ENCODE measurements at regions of chr17 and their contacts with region 1.

Region 1: GRCh38 chr17:17823433-17824118 is 13.2 kb downstream of the SREBF1 start:
- DNase-seq: peak; percentile 46 to 93 (median 78)
- ATAC-seq: peak; percentile 83
- H3K4me3 ChIP-seq: peak overlapping the region; percentile 53
- H3K4me3 Mint-ChIP-seq: peak overlapping the region; percentile 85
- H3K27ac ChIP-seq: peak overlapping the region; percentile 87 to 88
- H3K27ac Mint-ChIP-seq: peak overlapping the region; percentile 98
- H3K4me1 ChIP-seq: peaks cover 96% of the 10 kb centered on the region
- H3K4me1 Mint-ChIP-seq: peaks cover 83% of the 10 kb centered on the region
- H3K27me3 ChIP-seq: no peaks in the 10 kb centered on the region
- H3K27me3 Mint-ChIP-seq: no peaks in the 10 kb centered on the region
- CTCF ChIP-seq: no peak

Region 2: DNA sequence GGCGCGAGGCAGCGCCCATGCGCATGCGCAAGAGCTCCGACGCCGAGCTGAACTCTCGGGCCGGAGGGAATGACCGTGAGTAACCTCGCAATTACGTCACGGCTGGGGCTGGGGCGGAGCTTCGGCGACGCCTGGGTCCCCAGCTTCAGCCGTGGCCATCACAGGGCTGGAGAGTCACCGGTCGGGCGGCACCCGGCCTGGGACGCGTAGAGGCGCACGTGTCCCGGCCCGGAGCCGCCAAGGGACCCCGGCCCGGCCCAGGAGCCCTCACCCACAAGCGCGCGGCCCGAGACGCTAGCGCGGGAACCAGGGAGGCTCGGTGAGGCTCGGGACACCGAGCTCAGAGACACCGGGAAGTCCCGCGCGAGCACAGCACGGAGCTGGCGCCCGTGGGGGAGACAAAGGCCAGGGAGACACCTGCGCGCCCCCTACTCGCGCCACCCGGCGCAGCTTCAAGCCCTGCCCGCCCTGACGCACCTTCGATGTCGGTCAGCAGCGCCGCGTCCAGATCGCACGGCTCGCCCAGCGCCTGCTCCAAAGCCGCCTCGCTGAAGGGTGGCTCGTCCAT is 12.8 kb after region 1 on chr17:
- CTCF ChIA-PET with region 1: interaction called, 6 read pairs
- POLR2A ChIA-PET with region 1: interaction called, 10 read pairs
- intact Hi-C with region 1: loop called (anchors 1 kb)
- DNase-seq: peak; percentile 94 to 99 (median 97)
- ATAC-seq: peak; percentile 74
- H3K4me3 ChIP-seq: peak overlapping the region; percentile 77
- H3K4me3 Mint-ChIP-seq: peak overlapping the region; percentile 94
- H3K27ac ChIP-seq: peak overlapping the region; percentile 96 to 97
- H3K27ac Mint-ChIP-seq: peak overlapping the region; percentile 98
- H3K4me1 ChIP-seq: peaks cover 82% of the 10 kb centered on the region
- H3K4me1 Mint-ChIP-seq: peaks cover 69% of the 10 kb centered on the region
- H3K27me3 ChIP-seq: no peaks in the 10 kb centered on the region
- H3K27me3 Mint-ChIP-seq: no peaks in the 10 kb centered on the region
- CTCF ChIP-seq: no peak

Region 3: GRCh38 chr17:17849845-17850373 is 26.3 kb after region 1 on chr17:
- CTCF ChIA-PET with region 1: no interaction called
- POLR2A ChIA-PET with region 1: no interaction called
- intact Hi-C with region 1: loop called in 1 of 2 experiments (anchors 1 kb)
- DNase-seq: peak; percentile 37 to 91 (median 60)
- ATAC-seq: peak; percentile 68
- H3K4me3 ChIP-seq: no peak overlapping the region
- H3K4me3 Mint-ChIP-seq: peak overlapping the region; percentile 72
- H3K27ac ChIP-seq: peak overlapping the region; percentile 83
- H3K27ac Mint-ChIP-seq: peak overlapping the region; percentile 99
- H3K4me1 ChIP-seq: peaks cover 56% of the 10 kb centered on the region
- H3K4me1 Mint-ChIP-seq: peaks cover 52% of the 10 kb centered on the region
- H3K27me3 ChIP-seq: no peaks in the 10 kb centered on the region
- H3K27me3 Mint-ChIP-seq: no peaks in the 10 kb centered on the region
- CTCF ChIP-seq: peak; percentile 21

Region 4: DNA sequence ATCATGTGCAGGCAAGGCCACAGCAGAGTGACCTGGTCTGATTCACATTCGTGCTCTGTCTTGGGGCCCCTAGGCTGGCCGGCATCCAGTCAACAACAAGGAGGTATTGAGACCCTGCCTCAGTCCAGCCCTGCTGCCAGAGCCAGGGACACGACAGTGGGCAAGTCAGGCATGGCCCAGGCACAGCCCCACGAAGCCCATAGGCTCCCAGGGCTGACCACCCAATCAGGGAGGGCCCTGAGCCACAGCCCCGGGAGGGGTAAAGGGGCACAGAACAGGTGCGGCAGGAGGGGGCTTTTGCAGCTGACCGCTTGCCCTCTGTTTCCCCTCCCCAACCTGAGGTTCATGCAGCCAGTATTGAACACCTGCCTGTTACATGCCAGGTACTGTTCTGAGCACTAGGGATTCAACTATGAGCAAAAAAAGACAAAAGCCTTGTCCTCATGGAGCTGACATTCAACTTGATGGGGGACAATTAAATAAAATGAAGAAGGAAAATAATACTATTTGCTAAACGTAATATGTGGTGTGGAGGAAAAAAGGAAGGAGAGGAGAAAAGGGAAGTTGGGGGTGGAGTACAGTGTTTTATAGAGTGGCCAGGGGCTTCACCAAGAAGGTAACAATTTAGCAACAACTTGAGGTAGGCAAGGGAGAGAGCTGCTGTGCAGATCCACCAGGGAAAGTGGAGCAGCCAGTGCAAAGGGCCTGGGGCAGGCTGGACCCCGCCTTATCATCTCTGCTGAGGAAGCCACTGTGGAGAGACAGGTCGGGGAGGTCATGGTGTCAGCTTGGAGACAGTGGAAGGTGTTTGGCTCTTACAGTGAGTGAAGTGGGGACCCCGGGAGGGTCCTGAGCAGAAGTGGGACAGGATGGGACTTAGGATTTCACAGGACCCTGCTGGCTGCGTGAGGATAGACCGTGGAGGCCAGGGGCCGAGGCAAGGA is 155.2 kb after region 1 on chr17:
- CTCF ChIA-PET with region 1: no interaction called
- POLR2A ChIA-PET with region 1: no interaction called
- intact Hi-C with region 1: loop called in 1 of 2 experiments (anchors 5 kb)
- DNase-seq: no peak
- ATAC-seq: no peak
- H3K4me3 ChIP-seq: no peak overlapping the region
- H3K4me3 Mint-ChIP-seq: no peak overlapping the region
- H3K27ac ChIP-seq: no peak overlapping the region
- H3K27ac Mint-ChIP-seq: no peak overlapping the region
- H3K4me1 ChIP-seq: no peaks in the 10 kb centered on the region
- H3K4me1 Mint-ChIP-seq: no peaks in the 10 kb centered on the region
- H3K27me3 ChIP-seq: no peaks in the 10 kb centered on the region
- H3K27me3 Mint-ChIP-seq: no peaks in the 10 kb centered on the region
- CTCF ChIP-seq: no peak

Measured in CD4-positive, alpha-beta T cell (primary cell).